ENCODE measurements at regions of chr9 and their contacts with region 1.

Region 1: DNA sequence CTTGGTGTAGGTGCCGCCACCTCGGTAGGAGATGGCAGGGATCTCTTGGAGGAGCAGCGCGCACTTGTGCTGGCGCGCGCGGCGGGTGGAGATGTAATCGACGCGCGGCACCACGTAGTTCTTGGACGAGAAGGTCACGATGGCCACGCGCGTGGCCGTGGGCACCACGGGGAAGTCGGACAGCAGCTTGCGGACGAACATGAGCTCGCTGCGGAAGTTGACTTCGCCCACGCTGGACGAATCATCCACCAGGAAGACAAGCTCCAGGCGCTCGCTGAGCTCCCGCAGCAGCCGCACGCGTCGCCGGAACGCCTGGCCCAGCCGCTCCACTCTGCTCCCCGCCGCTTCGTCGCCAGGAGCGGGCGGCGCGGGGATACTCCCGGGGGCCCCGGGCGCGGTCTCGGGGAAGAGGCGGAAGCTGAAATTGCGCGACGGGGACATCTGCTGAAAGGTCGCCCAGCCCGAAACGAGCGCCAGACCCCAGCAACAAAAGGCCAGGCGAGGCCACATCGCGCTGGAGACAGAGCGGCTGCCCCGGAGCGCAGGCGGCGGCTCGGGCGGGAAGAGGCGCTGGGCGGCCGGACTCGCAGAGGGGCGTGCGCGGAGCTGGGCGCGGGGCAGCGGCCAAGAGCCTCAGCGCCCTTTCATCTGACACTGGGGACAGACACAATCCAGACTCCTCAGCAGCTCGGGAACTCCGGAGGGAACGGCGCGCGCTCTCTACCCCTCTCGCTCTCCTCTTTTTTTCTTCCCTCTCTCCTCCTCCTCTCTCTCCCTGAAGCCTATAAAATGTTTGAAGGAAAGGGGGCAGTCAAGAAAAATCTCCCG is at the start of gene SVEP1:
- DNase-seq: no peak
- H3K4me3 ChIP-seq: peak within 1 kb of the TSS; percentile 75
- H3K27ac ChIP-seq: peak within 1 kb of the TSS; percentile 82
- H3K27me3 ChIP-seq: no peaks in the 10 kb centered on the region
- CTCF ChIP-seq: no peak; the same call in 1 of the 2 replicates
- polyA plus RNA-seq, gene SVEP1: 34.8 and 40.9 TPM in 2 replicates

Region 2: GRCh38 chr9:110502842-110503241 is 76.4 kb before region 1 on chr9:
- CTCF ChIA-PET with region 1: no interaction called
- POLR2A ChIA-PET with region 1: no interaction called
- DNase-seq: no peak
- H3K4me3 ChIP-seq: no peak overlapping the region
- H3K27ac ChIP-seq: no peak overlapping the region
- H3K27me3 ChIP-seq: no peaks in the 10 kb centered on the region
- CTCF ChIP-seq: no peak

Region 3: GRCh38 chr9:110538225-110539041 is 40.8 kb before region 1 on chr9:
- CTCF ChIA-PET with region 1: no interaction called
- POLR2A ChIA-PET with region 1: interaction called, 10 read pairs
- DNase-seq: peak; percentile 30
- H3K4me3 ChIP-seq: no peak overlapping the region
- H3K27ac ChIP-seq: no peak overlapping the region
- H3K27me3 ChIP-seq: no peaks in the 10 kb centered on the region
- CTCF ChIP-seq: no peak

Measured in AG04450 (cell line).